Activated CD8-positive, alpha-beta T cell treated with anti-CD3 and anti-CD28 coated beads, Interleukin-2, amount 10 ng/mL, durations not matched to agents 7 days and 5 days (primary cell): ENCODE measurements at regions of chr4 and their contacts with region 1.

Region 1: GRCh38 chr4:121307445-121308327 is 73.1 kb downstream of the QRFPR start:
- DNase-seq: peak; percentile 66
- ATAC-seq: peak; percentile 61
- H3K4me3 Mint-ChIP-seq: no peak overlapping the region
- H3K27ac Mint-ChIP-seq: no peak overlapping the region
- H3K4me1 Mint-ChIP-seq: peaks cover 20% of the 10 kb centered on the region
- H3K27me3 Mint-ChIP-seq: peaks cover 3% of the 10 kb centered on the region

Region 2: DNA sequence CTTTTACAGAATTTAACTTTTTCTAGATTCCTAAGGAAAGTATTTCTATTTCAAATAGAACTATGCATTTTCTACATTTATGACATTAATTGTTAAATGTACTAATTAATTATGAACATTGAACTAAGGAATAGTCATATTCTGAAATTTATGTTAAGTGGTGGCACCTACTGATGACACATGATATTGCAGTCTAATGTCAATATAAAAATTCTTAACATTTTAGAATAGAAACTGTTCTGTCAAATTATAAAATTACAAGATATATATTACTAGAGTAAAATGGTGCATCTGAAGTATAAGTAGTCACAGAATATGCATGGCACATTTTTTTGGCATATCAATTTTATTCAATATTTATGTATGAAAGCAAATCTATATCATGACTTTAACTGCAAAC is 195.2 kb before region 1 on chr4:
- CTCF ChIA-PET with region 1: interaction called, 11 read pairs
- POLR2A ChIA-PET with region 1: no interaction called
- DNase-seq: no peak
- ATAC-seq: no peak
- H3K4me3 Mint-ChIP-seq: no peak overlapping the region
- H3K27ac Mint-ChIP-seq: no peak overlapping the region
- H3K4me1 Mint-ChIP-seq: peaks cover 20% of the 10 kb centered on the region
- H3K27me3 Mint-ChIP-seq: no peaks in the 10 kb centered on the region

Region 3: GRCh38 chr4:121199742-121200561 is 107.7 kb before region 1 on chr4:
- CTCF ChIA-PET with region 1: interaction called, 41 read pairs
- POLR2A ChIA-PET with region 1: interaction called, 3 read pairs
- DNase-seq: peak; percentile 51
- ATAC-seq: peak; percentile 74
- H3K4me3 Mint-ChIP-seq: peak overlapping the region; percentile 3
- H3K27ac Mint-ChIP-seq: peak overlapping the region; percentile 27
- H3K4me1 Mint-ChIP-seq: peaks cover 24% of the 10 kb centered on the region
- H3K27me3 Mint-ChIP-seq: no peaks in the 10 kb centered on the region

Region 4: GRCh38 chr4:121217351-121217750 is 90.3 kb before region 1 on chr4:
- CTCF ChIA-PET with region 1: interaction called, 23 read pairs
- POLR2A ChIA-PET with region 1: no interaction called
- DNase-seq: no peak
- ATAC-seq: no peak
- H3K4me3 Mint-ChIP-seq: no peak overlapping the region
- H3K27ac Mint-ChIP-seq: no peak overlapping the region
- H3K4me1 Mint-ChIP-seq: peaks cover 28% of the 10 kb centered on the region
- H3K27me3 Mint-ChIP-seq: no peaks in the 10 kb centered on the region

Region 5: GRCh38 chr4:121252224-121252806 is 55.4 kb before region 1 on chr4:
- CTCF ChIA-PET with region 1: interaction called, 32 read pairs
- POLR2A ChIA-PET with region 1: interaction called, 3 read pairs
- DNase-seq: peak; percentile 69
- ATAC-seq: no peak
- H3K4me3 Mint-ChIP-seq: no peak overlapping the region
- H3K27ac Mint-ChIP-seq: no peak overlapping the region
- H3K4me1 Mint-ChIP-seq: peaks cover 55% of the 10 kb centered on the region
- H3K27me3 Mint-ChIP-seq: no peaks in the 10 kb centered on the region

Region 6: GRCh38 chr4:121272526-121272925 is 35.2 kb before region 1 on chr4:
- CTCF ChIA-PET with region 1: interaction called, 21 read pairs
- POLR2A ChIA-PET with region 1: no interaction called
- DNase-seq: no peak
- ATAC-seq: no peak
- H3K4me3 Mint-ChIP-seq: no peak overlapping the region
- H3K27ac Mint-ChIP-seq: no peak overlapping the region
- H3K4me1 Mint-ChIP-seq: peaks cover 7% of the 10 kb centered on the region
- H3K27me3 Mint-ChIP-seq: peaks cover 3% of the 10 kb centered on the region

Region 7: DNA sequence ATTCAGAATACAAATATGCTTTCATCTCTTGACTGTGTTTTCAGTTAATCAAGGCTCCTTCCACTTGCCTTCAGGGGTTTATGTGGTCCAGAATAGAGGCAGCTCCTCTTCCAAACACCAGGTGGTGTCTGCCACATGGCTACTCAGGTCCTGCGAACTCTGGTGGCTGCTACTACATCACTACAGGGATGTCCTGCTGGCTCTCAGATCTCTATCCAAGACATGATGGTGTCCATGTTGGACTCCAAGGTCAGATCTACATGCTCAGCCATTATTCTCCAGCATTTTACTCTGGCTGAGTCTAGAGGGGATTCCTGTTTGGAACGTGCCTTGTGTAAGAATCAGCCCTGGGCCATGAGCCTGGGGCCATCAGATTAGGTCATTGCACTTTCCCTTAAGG is 30.1 kb before region 1 on chr4:
- CTCF ChIA-PET with region 1: interaction called, 21 read pairs
- POLR2A ChIA-PET with region 1: no interaction called
- DNase-seq: no peak
- ATAC-seq: no peak
- H3K4me3 Mint-ChIP-seq: no peak overlapping the region
- H3K27ac Mint-ChIP-seq: no peak overlapping the region
- H3K4me1 Mint-ChIP-seq: peaks cover 5% of the 10 kb centered on the region
- H3K27me3 Mint-ChIP-seq: peaks cover 11% of the 10 kb centered on the region

Region 8: DNA sequence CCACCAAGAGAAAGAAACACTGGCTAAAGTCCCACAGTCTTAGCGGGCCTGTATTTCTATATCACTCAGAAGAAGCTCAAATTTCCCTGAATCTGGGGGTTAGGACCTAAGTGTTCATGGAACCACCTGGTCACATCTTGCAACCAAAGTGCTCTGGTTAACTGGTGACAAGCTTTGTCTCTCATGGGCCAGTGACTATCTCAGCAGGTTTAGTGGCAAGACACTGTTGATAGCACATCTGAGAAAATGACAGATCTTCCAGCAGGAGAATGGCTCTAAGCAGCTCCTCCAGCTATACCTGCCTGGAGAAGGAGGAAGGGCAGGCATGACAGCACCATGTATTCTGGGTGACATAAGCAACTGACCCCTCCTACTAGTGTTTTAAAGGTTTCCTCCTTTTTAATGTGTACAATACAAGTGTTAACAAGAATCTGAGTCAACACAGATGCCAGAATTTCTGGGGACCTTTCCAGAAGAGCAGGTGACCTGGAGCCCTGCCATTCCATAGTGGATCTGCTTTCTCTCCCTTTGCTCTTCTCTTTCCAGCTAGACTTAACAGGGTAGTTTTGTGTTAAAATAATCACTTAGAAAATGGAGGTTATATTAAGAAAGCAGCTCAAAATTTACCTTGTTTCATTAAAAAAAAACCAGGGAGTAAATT is 90.4 kb after region 1 on chr4:
- CTCF ChIA-PET with region 1: no interaction called
- POLR2A ChIA-PET with region 1: no interaction called
- DNase-seq: no peak
- ATAC-seq: no peak
- H3K4me3 Mint-ChIP-seq: no peak overlapping the region
- H3K27ac Mint-ChIP-seq: no peak overlapping the region
- H3K4me1 Mint-ChIP-seq: no peaks in the 10 kb centered on the region
- H3K27me3 Mint-ChIP-seq: peaks cover 2% of the 10 kb centered on the region

Region 9: GRCh38 chr4:121484633-121485032 is 176.9 kb after region 1 on chr4:
- CTCF ChIA-PET with region 1: no interaction called
- POLR2A ChIA-PET with region 1: no interaction called
- DNase-seq: no peak
- ATAC-seq: peak; percentile 83
- H3K4me3 Mint-ChIP-seq: no peak overlapping the region
- H3K27ac Mint-ChIP-seq: no peak overlapping the region
- H3K4me1 Mint-ChIP-seq: no peaks in the 10 kb centered on the region
- H3K27me3 Mint-ChIP-seq: peaks cover 16% of the 10 kb centered on the region